Lower leg skin (tissue), 4 donors: ENCODE measurements at regions of chr20 and their contacts with region 1.

Region 1: GRCh38 chr20:31559704-31560093 is 45.4 kb upstream of the ID1 start:
- DNase-seq: no peak
- H3K4me3 ChIP-seq: no peak overlapping the region
- CTCF ChIP-seq: no peak
- POLR2A ChIP-seq: no peak

Region 2: GRCh38 chr20:31514159-31515071 is 45.3 kb before region 1 on chr20 and contains the start of gene HM13:
- intact Hi-C with region 1: no loop called
- DNase-seq: peak; percentile 86 to 98
- H3K4me3 ChIP-seq: peak within 1 kb of the TSS; percentile 93
- CTCF ChIP-seq: peak in 2 of 3 donors; percentile 48 to 75
- POLR2A ChIP-seq: no peak
- total RNA-seq, gene HM13: 35.0 to 51.9 (median 44.2) TPM

Region 3: DNA sequence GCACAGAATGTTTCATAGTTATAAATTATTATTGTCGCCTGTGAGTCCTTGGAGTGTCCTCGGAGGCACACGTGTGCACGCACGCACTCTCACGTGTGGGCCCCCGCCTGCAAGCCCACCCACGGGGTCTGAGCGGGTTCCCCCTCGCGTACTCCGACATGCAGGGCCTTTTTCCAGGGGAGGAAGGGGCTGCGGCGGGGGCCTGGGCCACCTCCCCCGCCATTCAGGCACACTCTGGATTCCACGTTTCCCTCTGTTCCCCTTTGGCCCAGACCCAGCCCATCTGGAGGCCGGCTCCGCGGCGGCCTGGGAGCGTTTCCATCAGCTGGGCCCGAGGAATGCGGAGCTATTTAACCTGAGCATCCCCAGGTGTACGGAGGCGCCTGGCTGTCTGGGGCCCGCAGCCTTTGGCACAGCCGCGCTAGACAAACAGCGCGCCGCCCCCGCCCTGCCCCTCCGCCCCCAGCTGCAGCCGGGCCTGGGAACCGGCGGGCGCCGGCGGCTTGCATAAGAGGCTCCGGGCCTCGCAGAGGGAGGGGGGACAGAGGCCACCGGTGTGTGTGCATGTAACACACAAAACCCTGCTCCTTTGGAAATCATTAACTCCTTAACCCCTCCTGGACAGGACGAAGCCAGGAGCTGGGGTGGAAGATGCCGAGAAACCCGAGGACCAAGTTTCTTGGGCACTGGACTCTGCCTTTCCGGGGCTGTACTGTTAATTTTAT is 48.7 kb after region 1 on chr20:
- intact Hi-C with region 1: loop called (anchors 2 kb)
- DNase-seq: peak; percentile 65 to 94
- H3K4me3 ChIP-seq: no peak overlapping the region
- CTCF ChIP-seq: peak in 1 of 3 donors; percentile 100
- POLR2A ChIP-seq: no peak

Region 4: GRCh38 chr20:31723319-31724078 is 163.8 kb after region 1 on chr20:
- intact Hi-C with region 1: loop called (anchors 10 kb)
- DNase-seq: peak; percentile 95 to 99
- H3K4me3 ChIP-seq: peak overlapping the region; percentile 74
- CTCF ChIP-seq: peak in 1 of 3 donors; percentile 91
- POLR2A ChIP-seq: peak in 1 of 2 donors; percentile 12